Left cardiac atrium (tissue), 4 donors: ENCODE measurements at regions of chr5 and their contacts with region 1.

Region 1: DNA sequence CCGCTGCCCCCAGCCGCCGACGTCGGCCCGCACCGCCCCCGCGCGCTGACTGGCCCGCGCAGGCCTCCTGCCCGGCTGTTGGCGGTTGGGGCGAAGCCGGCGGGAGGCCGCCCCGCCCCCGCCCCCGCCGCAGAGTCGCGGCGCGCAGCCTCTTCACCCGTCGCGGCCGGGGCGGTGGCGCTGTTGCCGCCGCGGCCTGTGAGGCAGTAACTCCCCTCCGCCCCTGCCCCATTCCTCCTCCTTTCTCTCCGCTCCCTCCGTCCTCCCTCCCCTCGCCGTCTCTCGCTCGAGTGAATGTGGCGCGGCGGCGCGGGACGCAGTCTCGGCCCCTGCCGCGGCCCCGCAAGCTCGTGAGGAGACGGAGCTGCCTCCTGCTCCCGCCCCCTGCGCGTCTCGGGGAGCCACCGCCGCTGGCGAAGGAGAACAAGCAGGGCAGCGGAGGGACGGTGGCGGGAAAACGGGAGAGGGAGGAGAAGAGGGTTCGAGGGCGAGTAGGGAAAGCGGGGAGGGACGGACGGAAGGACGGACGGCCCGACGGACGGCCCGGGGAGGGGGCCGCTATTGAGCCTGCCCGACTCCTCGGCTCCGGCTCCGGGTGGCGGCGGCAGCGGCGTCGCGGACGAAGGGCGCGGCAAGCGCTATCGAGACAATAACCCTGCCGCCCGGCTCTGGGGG is 637 bp upstream of the ERBIN start:
- DNase-seq: peak; percentile 85
- ATAC-seq: peak; percentile 91

Region 2: GRCh38 chr5:65640240-65640639 is 285.5 kb before region 1 on chr5:
- intact Hi-C with region 1: no loop called
- DNase-seq: no peak
- ATAC-seq: no peak

Region 3: DNA sequence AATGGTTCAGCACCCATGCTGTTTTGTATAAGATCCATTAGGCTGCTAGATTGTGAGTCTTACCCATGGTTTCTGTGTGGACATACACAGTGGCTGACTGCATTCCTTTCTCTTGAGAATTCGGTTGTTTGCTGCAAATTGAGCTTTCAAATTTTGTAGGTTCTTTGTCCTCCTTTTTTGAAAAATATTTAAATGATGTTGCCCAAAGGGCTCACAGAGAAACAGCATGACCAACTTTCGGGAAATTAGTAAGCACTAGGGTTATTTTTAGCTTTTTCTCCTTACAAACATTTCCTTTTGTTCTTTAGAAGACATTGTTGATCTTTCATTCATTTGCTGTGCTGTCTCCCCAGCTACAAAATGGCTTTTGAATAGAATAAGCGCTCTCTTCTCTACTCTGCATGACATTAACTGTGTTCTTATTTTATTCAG is 124.4 kb before region 1 on chr5:
- intact Hi-C with region 1: no loop called
- DNase-seq: no peak
- ATAC-seq: no peak

Region 4: DNA sequence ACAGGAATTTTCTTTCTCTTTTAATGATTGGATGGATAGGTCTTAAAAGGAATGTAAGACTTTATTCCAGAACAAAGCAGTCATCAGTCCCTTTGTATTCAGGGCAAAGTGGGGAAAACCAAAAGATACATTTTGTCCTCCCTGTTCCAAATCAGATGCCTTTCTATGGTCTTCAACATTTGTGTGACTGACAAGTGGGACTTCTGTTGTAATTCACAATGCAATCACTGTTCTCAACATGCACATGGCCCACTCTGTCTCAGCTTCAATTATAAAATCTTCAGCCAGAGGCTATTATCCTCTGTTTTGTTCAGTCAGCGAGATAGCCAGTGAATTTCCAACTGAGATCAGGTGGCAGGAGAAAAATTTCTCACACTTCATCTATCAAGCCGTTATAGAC is 94.9 kb before region 1 on chr5:
- intact Hi-C with region 1: loop called in 1 of 2 experiments (anchors 5 kb)
- DNase-seq: no peak
- ATAC-seq: no peak

Region 5: GRCh38 chr5:65970481-65971367 is 45.0 kb after region 1 on chr5:
- intact Hi-C with region 1: loop called in 1 of 2 experiments (anchors 5 kb)
- DNase-seq: no peak
- ATAC-seq: no peak

Region 6: GRCh38 chr5:66144074-66144833 is 218.5 kb after region 1 on chr5 and contains the start of gene SREK1:
- intact Hi-C with region 1: loop called in 1 of 2 experiments (anchors 5 kb)
- DNase-seq: peak; percentile 96
- ATAC-seq: peak; percentile 95 to 98
- total RNA-seq, gene SREK1: 32.8 to 36.8 TPM